Psoas muscle (tissue), 8 donors: ENCODE measurements at regions of chr12 and their contacts with region 1.

Region 1: GRCh38 chr12:4421590-4422031 is 24.0 kb downstream of the FGF6 start:
- DNase-seq: no peak
- ATAC-seq: peak; percentile 67 to 86 (median 73)
- H3K4me3 ChIP-seq: no peak overlapping the region
- H3K27ac ChIP-seq: no peak overlapping the region
- H3K4me1 ChIP-seq: no peaks in the 10 kb centered on the region
- H3K27me3 ChIP-seq: peaks cover 0 to 12% (median 5%) of the 10 kb centered on the region in 3 donors
- CTCF ChIP-seq: peak; percentile 67

Region 2: GRCh38 chr12:4307593-4308333 is 113.8 kb before region 1 on chr12:
- intact Hi-C with region 1: loop called in 1 of 2 experiments (anchors 5 kb)
- DNase-seq: peak; percentile 56 to 76
- ATAC-seq: peak; percentile 94 to 100 (median 96)
- H3K4me3 ChIP-seq: peak overlapping the region; percentile 48
- H3K27ac ChIP-seq: peak overlapping the region; percentile 1
- H3K4me1 ChIP-seq: peaks cover 5% of the 10 kb centered on the region
- H3K27me3 ChIP-seq: no peaks in the 10 kb centered on the region
- CTCF ChIP-seq: peak; percentile 76

Region 3: DNA sequence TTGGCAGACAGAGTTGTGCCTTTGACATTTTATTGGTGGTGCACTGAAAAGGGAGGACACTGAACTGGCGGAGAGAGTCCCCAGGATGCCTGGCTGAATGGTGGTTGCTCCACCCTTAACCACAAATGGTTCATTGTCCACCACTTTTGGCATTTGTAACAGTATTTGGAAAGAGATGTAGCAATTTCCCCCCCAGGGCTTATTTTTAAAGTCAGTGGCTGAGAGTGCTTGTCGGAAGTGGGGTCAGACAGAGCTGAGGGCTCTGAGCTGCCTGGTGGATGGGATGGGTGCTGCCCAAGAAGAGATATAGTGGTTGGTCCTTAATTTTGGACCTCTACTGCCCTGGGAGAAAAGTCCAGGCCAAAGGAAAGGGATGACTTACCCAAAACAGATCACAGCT is 55.5 kb after region 1 on chr12:
- intact Hi-C with region 1: loop called in 1 of 2 experiments (anchors 10 kb)
- DNase-seq: no peak
- ATAC-seq: no peak
- H3K4me3 ChIP-seq: no peak overlapping the region
- H3K27ac ChIP-seq: no peak overlapping the region
- H3K4me1 ChIP-seq: no peaks in the 10 kb centered on the region
- H3K27me3 ChIP-seq: no peaks in the 10 kb centered on the region
- CTCF ChIP-seq: no peak

Region 4: DNA sequence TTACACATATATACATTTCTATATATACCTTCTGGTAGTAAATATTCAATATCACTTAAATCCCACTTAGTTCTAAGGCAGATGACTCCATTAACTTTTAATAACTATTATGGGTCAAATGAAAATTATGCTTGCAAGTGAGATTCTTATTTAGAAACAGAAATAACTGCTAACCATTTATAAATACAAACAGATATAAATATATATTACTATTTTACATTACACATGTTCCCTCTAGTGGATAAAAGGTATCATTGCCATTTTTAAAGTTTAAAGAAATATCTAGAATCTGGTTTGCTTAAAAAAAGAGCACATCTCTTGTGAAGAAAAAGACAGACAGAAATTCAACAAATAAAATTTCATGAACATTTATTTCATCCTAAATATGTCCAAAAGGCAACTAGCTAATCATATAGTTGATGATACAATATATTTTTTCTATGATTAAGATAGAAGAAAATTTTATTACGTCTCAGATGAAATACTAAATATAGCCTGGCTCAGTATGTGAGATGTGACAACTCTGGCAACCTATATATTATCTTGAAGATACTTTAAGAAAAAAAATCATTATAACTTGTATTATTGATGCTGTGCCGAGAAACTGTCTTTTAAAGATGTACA is 105.4 kb after region 1 on chr12:
- intact Hi-C with region 1: loop called (anchors 2 to 5 kb)
- DNase-seq: no peak
- ATAC-seq: peak in 1 of 4 donors; percentile 57
- H3K4me3 ChIP-seq: no peak overlapping the region
- H3K27ac ChIP-seq: no peak overlapping the region
- H3K4me1 ChIP-seq: no peaks in the 10 kb centered on the region
- H3K27me3 ChIP-seq: no peaks in the 10 kb centered on the region
- CTCF ChIP-seq: peak; percentile 68